ENCODE measurements at regions of chr17 and their contacts with region 1.

Region 1: DNA sequence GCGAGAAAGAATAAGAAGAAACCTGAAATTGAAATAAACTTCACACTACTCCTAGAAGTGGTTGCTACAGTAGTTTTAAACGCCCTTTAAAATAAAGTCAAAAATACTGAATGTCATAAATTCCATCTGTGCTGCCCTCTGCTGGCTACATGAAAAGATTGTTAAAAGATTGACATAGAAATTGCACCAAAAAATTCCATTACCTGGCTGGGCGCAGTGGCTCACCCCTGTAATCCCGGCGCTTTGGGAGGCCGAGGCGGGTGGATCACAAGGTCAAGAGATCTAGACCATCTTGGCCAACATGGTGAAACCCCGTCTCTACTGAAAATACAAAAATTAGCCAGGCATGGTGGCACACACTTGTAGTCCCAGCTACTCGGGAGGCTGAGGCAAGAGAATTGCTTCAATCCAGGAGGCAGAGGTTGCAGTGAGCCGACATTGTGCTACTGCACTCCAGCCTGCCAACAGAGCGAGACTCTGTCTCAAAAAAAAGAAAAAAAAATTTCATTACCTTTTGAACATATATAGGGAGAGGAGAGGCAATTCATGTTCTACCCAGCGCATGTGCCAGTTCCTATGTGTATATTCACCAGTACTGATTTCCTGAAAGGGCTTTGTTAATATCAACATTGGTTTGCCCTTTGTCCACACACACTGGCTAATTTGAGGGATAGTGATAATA is 36.5 kb downstream of the CYTH1 start:
- DNase-seq: no peak
- H3K4me3 Mint-ChIP-seq: no peak overlapping the region
- H3K27ac Mint-ChIP-seq: peak overlapping the region; percentile 55
- H3K4me1 Mint-ChIP-seq: peaks cover 74% of the 10 kb centered on the region
- H3K27me3 Mint-ChIP-seq: no peaks in the 10 kb centered on the region

Region 2: GRCh38 chr17:78555746-78556401 is 189.7 kb before region 1 on chr17:
- intact Hi-C with region 1: no loop called
- DNase-seq: no peak
- H3K4me3 Mint-ChIP-seq: no peak overlapping the region
- H3K27ac Mint-ChIP-seq: no peak overlapping the region
- H3K4me1 Mint-ChIP-seq: no peaks in the 10 kb centered on the region
- H3K27me3 Mint-ChIP-seq: no peaks in the 10 kb centered on the region

Region 3: GRCh38 chr17:78573956-78574355 is 171.6 kb before region 1 on chr17:
- intact Hi-C with region 1: no loop called
- DNase-seq: no peak
- H3K4me3 Mint-ChIP-seq: no peak overlapping the region
- H3K27ac Mint-ChIP-seq: no peak overlapping the region
- H3K4me1 Mint-ChIP-seq: no peaks in the 10 kb centered on the region
- H3K27me3 Mint-ChIP-seq: peaks cover 3% of the 10 kb centered on the region

Region 4: GRCh38 chr17:78689029-78689428 is 56.5 kb before region 1 on chr17:
- intact Hi-C with region 1: no loop called
- DNase-seq: no peak
- H3K4me3 Mint-ChIP-seq: no peak overlapping the region
- H3K27ac Mint-ChIP-seq: no peak overlapping the region
- H3K4me1 Mint-ChIP-seq: no peaks in the 10 kb centered on the region
- H3K27me3 Mint-ChIP-seq: no peaks in the 10 kb centered on the region

Region 5: DNA sequence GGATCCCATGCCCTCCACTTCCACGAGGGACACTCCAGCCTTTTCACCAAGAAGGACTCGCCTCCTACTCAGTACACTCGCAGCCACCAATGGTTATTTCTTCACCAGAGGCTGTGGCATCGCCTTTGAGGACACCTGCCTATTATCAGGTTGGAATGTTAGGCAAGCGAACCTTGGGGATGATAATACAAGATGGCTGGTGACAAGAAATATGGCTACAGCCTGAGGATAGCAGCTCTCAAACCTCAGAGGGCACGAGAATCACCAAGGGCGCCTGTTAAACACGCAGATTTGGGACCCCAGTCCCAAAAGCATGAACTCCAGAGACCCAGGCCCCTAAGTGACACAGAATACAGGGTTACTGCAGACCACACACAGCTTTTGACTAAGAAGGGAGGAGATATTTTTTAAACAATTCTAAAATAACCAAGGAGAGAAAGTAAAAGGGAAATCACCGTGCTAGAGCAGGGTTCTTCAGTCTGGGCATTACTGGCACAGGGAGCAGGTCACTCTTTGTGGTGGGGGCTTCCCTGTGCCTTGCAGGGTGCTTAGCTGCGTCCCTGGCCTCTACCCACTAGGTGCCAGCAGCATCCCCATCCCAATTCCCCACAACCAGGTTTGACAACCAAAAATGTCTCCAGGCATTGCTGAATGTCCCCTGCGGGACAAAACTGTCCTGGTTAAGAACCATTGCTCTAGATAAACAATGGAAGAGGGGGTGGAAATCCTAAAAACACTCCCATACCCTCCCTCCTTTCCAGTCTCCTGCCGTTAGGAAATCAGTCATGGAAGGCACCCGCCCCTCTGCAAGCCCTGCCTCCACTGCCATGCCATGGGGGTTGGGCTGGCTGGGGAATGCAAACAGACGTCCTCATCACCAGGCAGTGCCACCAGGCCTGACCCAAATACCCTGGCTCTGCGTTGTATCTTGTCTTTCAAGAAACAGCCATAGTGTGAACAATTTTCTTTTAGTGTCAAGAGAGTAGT is 21.3 kb before region 1 on chr17:
- intact Hi-C with region 1: loop called (anchors 2 kb)
- DNase-seq: no peak
- H3K4me3 Mint-ChIP-seq: no peak overlapping the region
- H3K27ac Mint-ChIP-seq: peak overlapping the region; percentile 9
- H3K4me1 Mint-ChIP-seq: peaks cover 70% of the 10 kb centered on the region
- H3K27me3 Mint-ChIP-seq: no peaks in the 10 kb centered on the region

Region 6: GRCh38 chr17:78759203-78759968 is 13.8 kb after region 1 on chr17:
- intact Hi-C with region 1: no loop called
- DNase-seq: peak; percentile 69
- H3K4me3 Mint-ChIP-seq: peak overlapping the region; percentile 51
- H3K27ac Mint-ChIP-seq: peak overlapping the region; percentile 98
- H3K4me1 Mint-ChIP-seq: peaks cover 54% of the 10 kb centered on the region
- H3K27me3 Mint-ChIP-seq: no peaks in the 10 kb centered on the region